Caco-2 (cell line): ENCODE measurements at regions of chr2 and their contacts with region 1.

Region 1: GRCh38 chr2:9142551-9143263 is 63.9 kb upstream of the ASAP2 start:
- DNase-seq: peak; percentile 95 to 97
- H3K4me3 ChIP-seq: peak overlapping the region; percentile 14; the same call in 1 of the 2 replicates
- H3K4me3 Mint-ChIP-seq: peak overlapping the region; percentile 49
- H3K27ac Mint-ChIP-seq: peak overlapping the region; percentile 15
- H3K4me1 ChIP-seq: peaks cover 21% of the 10 kb centered on the region
- H3K4me1 Mint-ChIP-seq: peaks cover 7% of the 10 kb centered on the region
- H3K27me3 ChIP-seq: no peaks in the 10 kb centered on the region
- H3K27me3 Mint-ChIP-seq: no peaks in the 10 kb centered on the region
- CTCF ChIP-seq: peak; percentile 98 to 99

Region 2: DNA sequence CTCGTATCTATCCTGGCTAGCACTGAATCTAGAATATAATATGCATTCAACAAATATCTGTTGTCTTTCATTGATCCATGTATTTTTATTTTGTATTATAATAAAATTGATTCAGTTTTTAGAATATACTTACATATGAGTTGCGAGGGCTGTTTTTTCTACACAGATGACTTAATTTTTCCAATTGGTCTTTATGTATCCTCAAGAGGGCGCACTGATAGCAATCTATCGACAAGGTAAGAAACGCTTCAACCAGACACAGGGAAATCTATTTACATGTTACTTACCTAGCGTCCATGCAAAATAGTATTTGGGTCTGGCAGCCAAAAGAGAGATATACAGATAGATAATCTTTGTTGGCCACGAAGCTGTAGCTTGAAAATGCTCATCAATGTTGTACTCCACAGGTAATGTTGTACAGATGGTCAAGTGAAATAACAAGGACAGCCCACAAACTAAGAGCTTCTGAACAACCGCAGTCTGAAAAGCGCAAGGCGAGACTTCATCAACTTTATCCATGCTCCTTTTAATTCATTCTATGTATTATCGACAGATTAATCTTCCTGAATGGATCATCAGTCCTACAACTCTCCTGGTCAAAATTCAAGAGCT is 269.8 kb before region 1 on chr2:
- CTCF ChIA-PET with region 1: interaction called, 6 read pairs
- POLR2A ChIA-PET with region 1: no interaction called
- intact Hi-C with region 1: loop called (anchors 1 kb)
- DNase-seq: peak in 1 of 2 experiments; percentile 43
- H3K4me3 ChIP-seq: no peak overlapping the region
- H3K4me3 Mint-ChIP-seq: no peak overlapping the region
- H3K27ac Mint-ChIP-seq: no peak overlapping the region
- H3K4me1 ChIP-seq: no peaks in the 10 kb centered on the region
- H3K4me1 Mint-ChIP-seq: no peaks in the 10 kb centered on the region
- H3K27me3 ChIP-seq: no peaks in the 10 kb centered on the region
- H3K27me3 Mint-ChIP-seq: no peaks in the 10 kb centered on the region
- CTCF ChIP-seq: peak; percentile 42 to 71

Region 3: GRCh38 chr2:9178904-9179571 is 36.3 kb after region 1 on chr2:
- CTCF ChIA-PET with region 1: no interaction called
- POLR2A ChIA-PET with region 1: no interaction called
- intact Hi-C with region 1: loop called (anchors 1 kb)
- DNase-seq: peak; percentile 51 to 69
- H3K4me3 ChIP-seq: no peak overlapping the region
- H3K4me3 Mint-ChIP-seq: peak overlapping the region; percentile 72
- H3K27ac Mint-ChIP-seq: peak overlapping the region; percentile 99
- H3K4me1 ChIP-seq: peaks cover 44% of the 10 kb centered on the region
- H3K4me1 Mint-ChIP-seq: peaks cover 44% of the 10 kb centered on the region
- H3K27me3 ChIP-seq: no peaks in the 10 kb centered on the region
- H3K27me3 Mint-ChIP-seq: no peaks in the 10 kb centered on the region
- CTCF ChIP-seq: no peak

Region 4: GRCh38 chr2:9196619-9197018 is 53.9 kb after region 1 on chr2:
- CTCF ChIA-PET with region 1: no interaction called
- POLR2A ChIA-PET with region 1: no interaction called
- intact Hi-C with region 1: no loop called
- DNase-seq: no peak
- H3K4me3 ChIP-seq: no peak overlapping the region
- H3K4me3 Mint-ChIP-seq: no peak overlapping the region
- H3K27ac Mint-ChIP-seq: no peak overlapping the region
- H3K4me1 ChIP-seq: peaks cover 9% of the 10 kb centered on the region
- H3K4me1 Mint-ChIP-seq: peaks cover 10% of the 10 kb centered on the region
- H3K27me3 ChIP-seq: no peaks in the 10 kb centered on the region
- H3K27me3 Mint-ChIP-seq: no peaks in the 10 kb centered on the region
- CTCF ChIP-seq: no peak

Region 5: DNA sequence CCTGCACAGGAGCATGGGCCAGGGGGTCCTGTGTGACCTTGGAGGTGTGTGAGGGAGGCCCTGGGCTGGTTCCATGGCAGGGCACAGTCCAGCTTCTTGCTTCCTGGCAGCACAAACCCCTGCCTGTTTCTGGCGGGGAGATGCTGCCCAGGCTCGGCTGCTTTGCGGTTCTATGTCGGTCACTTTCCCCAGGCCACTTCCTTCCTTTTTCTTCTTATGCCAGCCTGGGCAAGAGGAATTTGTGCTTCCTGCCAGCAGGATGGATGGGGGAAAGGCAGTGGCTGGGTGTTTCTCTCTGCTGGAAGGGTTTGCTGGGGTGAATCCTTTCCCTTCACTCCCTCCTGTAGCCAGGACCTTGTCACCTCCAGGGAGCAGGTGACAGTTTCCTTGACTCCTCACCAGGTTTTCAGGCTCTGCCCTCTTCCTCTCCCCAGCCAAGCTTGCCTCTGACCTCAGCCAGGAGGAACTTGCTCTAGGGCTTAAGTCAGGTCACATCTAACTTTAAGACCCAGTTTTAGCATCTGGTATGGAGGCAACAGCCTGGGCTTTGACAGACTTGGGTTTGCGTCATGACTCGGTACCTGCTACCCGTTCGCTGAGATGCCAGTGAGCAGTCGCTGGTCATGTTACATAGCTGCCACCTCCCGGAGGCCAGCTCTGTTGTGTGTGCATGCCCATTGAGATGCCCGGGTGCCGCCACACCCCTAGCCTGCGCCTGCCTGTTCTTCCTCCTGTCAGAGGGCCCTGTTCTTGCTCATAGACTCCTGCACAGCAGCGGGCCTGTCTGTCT is 88.4 kb after region 1 on chr2:
- CTCF ChIA-PET with region 1: no interaction called
- POLR2A ChIA-PET with region 1: no interaction called
- intact Hi-C with region 1: no loop called
- DNase-seq: no peak
- H3K4me3 ChIP-seq: no peak overlapping the region
- H3K4me3 Mint-ChIP-seq: no peak overlapping the region
- H3K27ac Mint-ChIP-seq: no peak overlapping the region
- H3K4me1 ChIP-seq: peaks cover 38% of the 10 kb centered on the region
- H3K4me1 Mint-ChIP-seq: peaks cover 53% of the 10 kb centered on the region
- H3K27me3 ChIP-seq: no peaks in the 10 kb centered on the region
- H3K27me3 Mint-ChIP-seq: no peaks in the 10 kb centered on the region
- CTCF ChIP-seq: no peak

Region 6: DNA sequence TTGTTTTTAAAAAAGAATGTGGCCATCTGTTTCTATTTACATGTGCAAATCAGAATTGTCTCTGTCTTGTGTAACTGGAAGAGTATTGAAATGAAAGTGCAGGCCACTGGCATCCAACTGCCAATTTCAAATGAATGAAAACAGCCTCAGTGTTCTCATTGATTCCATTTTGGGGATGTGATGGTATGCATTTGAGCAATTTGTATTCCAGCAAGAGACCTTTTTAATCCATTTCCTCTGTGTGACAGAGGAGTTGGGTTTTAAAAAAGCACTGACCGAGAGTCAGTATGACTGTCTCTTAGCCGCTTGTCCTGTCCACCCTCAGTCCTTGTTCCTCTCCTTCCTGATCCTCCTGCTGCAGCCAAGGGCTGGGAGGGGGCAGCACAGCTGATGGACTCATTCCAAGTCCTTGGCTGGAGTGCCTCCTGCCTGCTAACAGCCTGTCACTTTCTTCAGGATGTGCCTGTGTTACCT is 113.9 kb after region 1 on chr2:
- CTCF ChIA-PET with region 1: interaction called, 4 read pairs
- POLR2A ChIA-PET with region 1: no interaction called
- intact Hi-C with region 1: loop called (anchors 1 kb)
- DNase-seq: peak in 1 of 2 experiments; percentile 37
- H3K4me3 ChIP-seq: no peak overlapping the region
- H3K4me3 Mint-ChIP-seq: no peak overlapping the region
- H3K27ac Mint-ChIP-seq: peak overlapping the region; percentile 2
- H3K4me1 ChIP-seq: peaks cover 20% of the 10 kb centered on the region
- H3K4me1 Mint-ChIP-seq: peaks cover 21% of the 10 kb centered on the region
- H3K27me3 ChIP-seq: no peaks in the 10 kb centered on the region
- H3K27me3 Mint-ChIP-seq: no peaks in the 10 kb centered on the region
- CTCF ChIP-seq: peak in 1 of 2 experiments; percentile 10

Region 7: DNA sequence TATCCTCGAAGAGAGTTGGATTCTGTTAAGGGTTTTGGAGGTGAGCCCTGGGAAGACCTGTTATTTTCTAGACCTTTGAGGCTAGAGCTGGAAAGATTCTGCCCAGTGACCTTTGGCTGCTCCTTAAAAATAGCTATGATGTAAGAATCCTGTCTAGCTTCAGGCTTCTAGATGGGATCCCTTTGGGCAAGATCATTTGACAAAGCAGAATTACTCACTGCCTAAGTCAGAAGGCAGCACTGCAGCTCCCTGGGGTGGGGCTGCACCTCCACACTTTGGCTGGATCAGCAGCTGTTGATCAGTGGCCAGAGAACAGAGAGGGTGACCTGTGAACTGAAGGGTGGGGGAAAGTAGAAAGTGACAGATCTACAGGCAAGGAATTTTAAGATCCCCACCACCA is 167.7 kb after region 1 on chr2:
- CTCF ChIA-PET with region 1: no interaction called
- POLR2A ChIA-PET with region 1: no interaction called
- intact Hi-C with region 1: no loop called
- DNase-seq: peak; percentile 33 to 41
- H3K4me3 ChIP-seq: no peak overlapping the region
- H3K4me3 Mint-ChIP-seq: no peak overlapping the region
- H3K27ac Mint-ChIP-seq: peak overlapping the region; percentile 73
- H3K4me1 ChIP-seq: peaks cover 19% of the 10 kb centered on the region
- H3K4me1 Mint-ChIP-seq: peaks cover 21% of the 10 kb centered on the region
- H3K27me3 ChIP-seq: no peaks in the 10 kb centered on the region
- H3K27me3 Mint-ChIP-seq: no peaks in the 10 kb centered on the region
- CTCF ChIP-seq: no peak

Region 8: GRCh38 chr2:9370746-9371145 is 228.0 kb after region 1 on chr2:
- CTCF ChIA-PET with region 1: interaction called, 11 read pairs
- POLR2A ChIA-PET with region 1: no interaction called
- intact Hi-C with region 1: loop called (anchors 1 kb)
- DNase-seq: no peak
- H3K4me3 ChIP-seq: no peak overlapping the region
- H3K4me3 Mint-ChIP-seq: no peak overlapping the region
- H3K27ac Mint-ChIP-seq: no peak overlapping the region
- H3K4me1 ChIP-seq: peaks cover 7% of the 10 kb centered on the region; the same call in 1 of the 2 replicates
- H3K4me1 Mint-ChIP-seq: peaks cover 11% of the 10 kb centered on the region
- H3K27me3 ChIP-seq: no peaks in the 10 kb centered on the region
- H3K27me3 Mint-ChIP-seq: no peaks in the 10 kb centered on the region
- CTCF ChIP-seq: no peak

Region 9: DNA sequence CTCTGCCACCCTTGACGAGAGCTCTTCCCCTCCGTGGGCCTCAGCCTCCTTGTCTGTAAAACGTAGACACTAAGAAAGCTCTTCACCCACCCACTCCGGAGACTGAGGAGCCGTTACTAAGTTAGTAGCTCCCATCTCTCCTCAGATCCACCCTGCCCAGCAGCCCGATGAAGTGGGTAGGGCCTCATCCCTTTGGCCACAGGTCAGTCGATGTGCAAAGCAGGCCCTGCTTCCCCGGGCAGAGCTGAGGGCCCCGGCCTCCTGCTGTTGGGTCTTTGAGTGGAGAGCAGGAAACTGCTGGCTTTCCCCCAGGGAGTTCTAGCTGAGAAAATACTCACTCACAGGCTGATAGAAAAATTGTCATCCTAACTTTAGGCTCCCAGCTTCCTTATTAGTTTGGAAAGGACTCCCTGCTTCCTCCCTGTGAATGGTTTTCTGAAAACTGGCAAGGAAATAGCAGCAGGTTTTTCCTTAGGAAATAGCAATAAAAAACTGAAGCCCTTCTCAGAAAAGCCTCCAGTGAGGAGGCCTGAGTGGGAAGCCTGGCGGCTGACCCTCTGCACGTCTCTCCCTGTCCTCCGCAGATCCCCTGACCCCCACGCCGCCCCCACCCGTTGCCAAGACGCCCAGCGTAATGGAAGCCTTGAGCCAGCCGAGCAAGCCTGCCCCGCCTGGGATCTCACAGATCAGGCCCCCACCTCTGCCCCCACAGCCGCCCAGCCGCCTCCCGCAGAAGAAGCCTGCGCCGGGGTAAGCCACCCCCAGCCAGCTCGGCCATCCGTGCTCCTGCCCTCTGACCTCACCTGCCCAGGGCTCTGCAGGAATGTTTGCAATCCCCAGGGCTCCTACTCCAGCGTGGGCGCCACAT is 250.4 kb after region 1 on chr2:
- CTCF ChIA-PET with region 1: interaction called, 11 read pairs
- POLR2A ChIA-PET with region 1: no interaction called
- intact Hi-C with region 1: no loop called
- DNase-seq: peak in 1 of 2 experiments; percentile 23
- H3K4me3 ChIP-seq: no peak overlapping the region
- H3K4me3 Mint-ChIP-seq: no peak overlapping the region
- H3K27ac Mint-ChIP-seq: no peak overlapping the region
- H3K4me1 ChIP-seq: no peaks in the 10 kb centered on the region
- H3K4me1 Mint-ChIP-seq: no peaks in the 10 kb centered on the region
- H3K27me3 ChIP-seq: no peaks in the 10 kb centered on the region
- H3K27me3 Mint-ChIP-seq: no peaks in the 10 kb centered on the region
- CTCF ChIP-seq: no peak

Region 10: DNA sequence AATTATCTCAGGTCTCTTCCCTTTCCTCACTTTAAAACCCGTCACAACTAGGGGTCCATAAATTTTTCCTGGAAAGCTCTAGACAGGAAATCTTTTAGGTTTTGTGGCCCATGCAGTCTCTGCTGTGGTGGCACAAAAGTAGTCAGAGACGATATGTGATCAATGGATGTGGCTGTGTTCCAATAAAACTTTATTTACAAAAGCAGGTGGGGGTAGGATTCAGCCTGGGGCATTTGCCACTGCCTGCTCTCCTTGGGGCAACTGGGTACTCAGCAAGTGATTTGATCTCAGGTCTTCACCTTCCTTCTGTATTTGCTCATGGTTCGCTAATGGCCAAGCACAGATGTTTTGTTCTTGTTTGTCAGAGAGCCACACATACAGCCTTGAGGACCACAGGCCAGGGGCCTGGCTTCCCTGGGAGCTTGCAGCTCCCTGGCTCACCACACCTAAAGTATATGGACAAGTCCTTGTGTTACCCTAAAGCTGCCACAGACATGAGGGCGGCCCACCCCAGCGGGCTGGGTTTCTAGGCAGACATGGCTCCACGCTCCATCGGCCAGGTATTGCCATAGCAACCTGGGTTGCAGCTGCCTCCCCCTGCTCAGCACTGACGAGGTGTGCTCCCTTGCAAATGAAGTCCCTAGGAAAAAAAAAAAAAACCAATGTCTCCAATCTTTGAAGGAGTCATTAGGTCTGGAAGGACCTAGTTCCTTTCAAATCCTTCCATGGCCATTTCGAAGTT is 577.8 kb after region 1 on chr2:
- CTCF ChIA-PET with region 1: no interaction called
- POLR2A ChIA-PET with region 1: no interaction called
- intact Hi-C with region 1: no loop called
- DNase-seq: no peak
- H3K4me3 ChIP-seq: no peak overlapping the region
- H3K4me3 Mint-ChIP-seq: no peak overlapping the region
- H3K27ac Mint-ChIP-seq: no peak overlapping the region
- H3K4me1 ChIP-seq: peaks cover 4% of the 10 kb centered on the region; the same call in 1 of the 2 replicates
- H3K4me1 Mint-ChIP-seq: no peaks in the 10 kb centered on the region
- H3K27me3 ChIP-seq: no peaks in the 10 kb centered on the region
- H3K27me3 Mint-ChIP-seq: no peaks in the 10 kb centered on the region
- CTCF ChIP-seq: no peak